Activated naive CD4-positive, alpha-beta T cell treated with anti-CD3 and anti-CD28 coated beads for 36 hours (primary cell): ENCODE measurements at regions of chr9 and their contacts with region 1.

Region 1: DNA sequence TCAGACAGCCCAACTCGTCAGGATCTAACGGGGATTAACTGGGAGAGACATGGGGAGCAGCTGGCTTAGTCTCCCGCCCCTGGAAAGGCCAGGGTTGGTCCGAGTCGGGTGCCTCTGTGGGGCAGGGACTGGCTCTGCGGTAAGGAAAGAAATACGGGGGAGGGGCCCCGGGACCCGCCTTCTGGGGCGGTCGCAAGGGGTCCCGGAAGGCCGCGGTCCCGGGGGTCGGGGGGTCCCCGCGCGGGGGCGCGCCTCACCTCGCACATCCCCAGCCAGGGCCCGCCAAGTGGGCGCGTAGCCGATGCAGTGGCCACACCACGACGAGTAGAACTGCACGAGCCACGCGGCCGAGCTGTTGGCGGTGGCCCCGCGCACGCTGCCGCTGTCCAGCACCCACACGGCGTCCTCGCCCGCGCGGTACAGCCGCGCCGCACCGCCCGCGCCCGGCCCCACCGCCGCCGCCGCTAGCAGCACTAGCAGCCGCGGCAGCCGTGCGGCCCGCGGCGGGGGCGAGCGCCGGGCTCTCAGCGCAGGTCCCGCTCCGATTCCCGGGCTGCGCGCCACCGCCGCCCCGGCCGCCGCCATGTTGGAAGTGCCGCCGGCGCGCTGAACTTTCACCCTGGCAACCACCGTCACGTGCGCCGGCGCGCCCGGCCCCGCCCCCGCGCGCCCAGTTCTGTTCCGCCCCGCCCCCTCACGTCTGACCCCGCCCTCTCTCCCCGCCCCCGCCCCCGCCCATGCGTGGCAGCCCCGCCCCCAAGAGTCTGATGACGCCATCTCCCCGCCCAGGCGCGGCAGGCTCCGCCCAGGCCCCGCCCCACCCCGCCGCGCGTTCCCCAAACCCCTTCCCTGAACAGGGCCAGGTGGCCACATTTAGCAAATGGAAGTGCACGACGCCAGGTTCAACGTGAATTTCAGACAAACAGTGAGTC is at the start of gene QSOX2:
- DNase-seq: peak; percentile 85
- H3K4me3 Mint-ChIP-seq: peak within 1 kb of the TSS; percentile 92
- H3K27ac Mint-ChIP-seq: peak within 1 kb of the TSS; percentile 88
- H3K4me1 Mint-ChIP-seq: peaks cover 35% of the 10 kb centered on the region
- H3K27me3 Mint-ChIP-seq: no peaks in the 10 kb centered on the region
- total RNA-seq, gene QSOX2: 17.7 to 18.0 TPM

Region 2: DNA sequence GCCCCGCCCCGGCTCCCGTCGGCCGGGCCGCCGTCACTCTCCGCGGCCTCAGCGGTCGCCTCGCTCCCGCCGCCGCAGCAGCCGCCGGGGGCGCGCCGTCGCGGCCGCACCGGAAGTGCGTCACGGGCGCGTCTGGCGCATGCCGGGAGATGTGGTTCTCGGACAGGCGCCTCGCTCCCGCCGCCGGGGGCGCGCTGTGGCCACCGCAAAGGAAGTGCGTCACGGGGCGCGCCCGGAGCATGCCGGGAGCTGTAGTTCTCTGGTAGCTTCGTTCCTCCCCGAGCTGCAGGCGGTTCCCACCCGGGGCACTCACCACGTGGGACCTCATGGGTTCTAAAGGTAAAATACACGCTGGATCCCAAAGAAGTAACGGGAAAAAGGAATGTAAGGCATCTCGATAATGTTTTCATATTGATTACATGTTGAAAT is 284.2 kb before region 1 on chr9 and contains the start of gene UBAC1:
- CTCF ChIA-PET with region 1: no interaction called
- intact Hi-C with region 1: loop called (anchors 10 kb)
- DNase-seq: peak; percentile 94
- H3K4me3 Mint-ChIP-seq: peak within 1 kb of the TSS; percentile 87
- H3K27ac Mint-ChIP-seq: peak within 1 kb of the TSS; percentile 50
- H3K4me1 Mint-ChIP-seq: peaks cover 32% of the 10 kb centered on the region
- H3K27me3 Mint-ChIP-seq: no peaks in the 10 kb centered on the region
- total RNA-seq, gene UBAC1: 37.2 to 40.0 TPM

Region 3: GRCh38 chr9:136225748-136226679 is 19.5 kb before region 1 on chr9:
- CTCF ChIA-PET with region 1: no interaction called
- intact Hi-C with region 1: loop called (anchors 2 kb)
- DNase-seq: peak; percentile 76
- H3K4me3 Mint-ChIP-seq: no peak overlapping the region
- H3K27ac Mint-ChIP-seq: no peak overlapping the region
- H3K4me1 Mint-ChIP-seq: peaks cover 10% of the 10 kb centered on the region
- H3K27me3 Mint-ChIP-seq: no peaks in the 10 kb centered on the region

Region 4: DNA sequence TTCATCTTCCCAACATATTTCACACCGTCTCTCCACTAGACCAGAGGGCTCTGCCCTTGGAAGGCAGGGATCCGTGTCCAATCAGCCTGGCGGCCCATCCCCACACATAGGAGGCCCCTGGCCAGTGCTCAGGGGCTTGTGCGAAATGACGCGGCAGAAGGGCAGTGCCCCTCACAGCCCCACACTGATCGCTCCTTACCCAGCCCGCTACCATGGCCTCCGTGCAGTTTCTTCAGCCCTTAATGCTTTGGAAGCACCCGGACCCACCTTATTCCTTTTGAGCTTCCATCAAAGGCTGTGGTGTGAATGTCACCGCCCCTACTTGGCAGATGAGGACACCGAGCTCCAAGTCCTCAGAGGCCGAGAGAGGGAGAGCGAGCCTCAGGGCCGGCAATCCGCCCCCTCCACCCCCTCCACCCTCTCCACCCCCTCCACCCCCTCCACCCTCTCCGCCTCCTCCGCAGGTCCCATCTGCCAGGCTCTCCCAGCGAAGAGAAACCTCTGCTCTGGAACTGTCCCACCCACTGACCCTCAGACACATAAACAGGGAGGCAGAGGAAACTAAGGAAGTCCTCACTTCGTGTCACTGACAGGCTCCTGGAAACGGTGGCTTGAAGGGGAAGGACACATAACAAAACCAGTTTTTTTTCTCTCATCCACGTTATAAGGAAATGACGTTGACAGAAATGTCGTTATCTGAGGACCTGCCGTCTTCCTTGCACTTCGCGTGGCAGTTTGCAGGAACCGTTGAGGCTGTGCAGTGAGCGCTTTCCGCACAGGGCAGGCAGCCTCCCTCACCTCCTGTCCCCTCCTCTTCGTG is 13.8 kb before region 1 on chr9:
- CTCF ChIA-PET with region 1: interaction called, 4 read pairs
- intact Hi-C with region 1: loop called (anchors 1 kb)
- DNase-seq: peak; percentile 67
- H3K4me3 Mint-ChIP-seq: peak overlapping the region; percentile 48
- H3K27ac Mint-ChIP-seq: peak overlapping the region; percentile 72
- H3K4me1 Mint-ChIP-seq: peaks cover 39% of the 10 kb centered on the region
- H3K27me3 Mint-ChIP-seq: no peaks in the 10 kb centered on the region

Region 5: GRCh38 chr9:136267261-136268111 is 22.0 kb after region 1 on chr9:
- CTCF ChIA-PET with region 1: interaction called, 5 read pairs
- intact Hi-C with region 1: loop called (anchors 1 kb)
- DNase-seq: peak; percentile 85
- H3K4me3 Mint-ChIP-seq: peak overlapping the region; percentile 66
- H3K27ac Mint-ChIP-seq: peak overlapping the region; percentile 41
- H3K4me1 Mint-ChIP-seq: peaks cover 4% of the 10 kb centered on the region
- H3K27me3 Mint-ChIP-seq: peaks cover 2% of the 10 kb centered on the region

Region 6: DNA sequence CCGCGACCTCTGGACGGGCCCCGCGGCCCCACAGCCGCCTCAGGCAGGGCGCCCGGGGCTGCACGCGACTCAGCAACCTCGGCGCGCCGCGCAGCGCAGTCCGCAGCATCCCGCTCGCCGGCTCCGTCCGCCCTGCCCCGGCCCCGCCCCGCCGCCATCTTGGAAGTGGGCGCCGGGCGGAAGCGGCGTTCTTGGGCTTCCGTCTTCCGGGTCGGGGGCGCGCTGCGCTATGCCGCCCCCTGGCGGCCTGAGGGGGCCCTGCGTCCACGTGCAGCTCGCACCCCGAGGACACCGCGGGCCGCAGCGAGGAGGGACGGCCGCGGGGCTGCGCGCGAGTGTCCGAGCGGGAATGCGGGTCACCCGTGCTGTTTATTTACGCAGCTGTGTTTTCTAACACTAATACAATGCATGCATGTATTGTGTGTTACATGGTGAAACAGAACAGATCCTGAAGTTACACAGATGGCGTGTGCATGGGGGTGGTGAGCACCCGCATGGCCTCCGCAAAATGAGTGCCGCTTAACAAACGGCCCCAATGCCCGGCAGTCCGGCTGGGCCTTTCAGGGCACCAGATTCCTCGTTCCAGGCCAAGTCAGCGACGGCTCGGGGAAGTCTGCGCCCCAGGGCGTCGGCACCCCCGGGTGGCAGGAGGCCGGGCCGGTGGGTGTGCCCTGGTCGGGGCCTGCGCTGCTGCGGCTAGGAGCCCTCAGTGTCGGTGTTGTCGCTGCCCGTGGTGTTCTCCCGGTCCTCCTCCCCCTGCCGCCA is 118.3 kb after region 1 on chr9 and contains the start of gene DNLZ:
- CTCF ChIA-PET with region 1: no interaction called
- intact Hi-C with region 1: loop called (anchors 1 kb)
- DNase-seq: peak; percentile 86
- H3K4me3 Mint-ChIP-seq: peak within 1 kb of the TSS; percentile 84
- H3K27ac Mint-ChIP-seq: peak within 1 kb of the TSS; percentile 89
- H3K4me1 Mint-ChIP-seq: peaks cover 5% of the 10 kb centered on the region
- H3K27me3 Mint-ChIP-seq: no peaks in the 10 kb centered on the region
- total RNA-seq, gene DNLZ: 9.9 to 12.0 TPM

Region 7: DNA sequence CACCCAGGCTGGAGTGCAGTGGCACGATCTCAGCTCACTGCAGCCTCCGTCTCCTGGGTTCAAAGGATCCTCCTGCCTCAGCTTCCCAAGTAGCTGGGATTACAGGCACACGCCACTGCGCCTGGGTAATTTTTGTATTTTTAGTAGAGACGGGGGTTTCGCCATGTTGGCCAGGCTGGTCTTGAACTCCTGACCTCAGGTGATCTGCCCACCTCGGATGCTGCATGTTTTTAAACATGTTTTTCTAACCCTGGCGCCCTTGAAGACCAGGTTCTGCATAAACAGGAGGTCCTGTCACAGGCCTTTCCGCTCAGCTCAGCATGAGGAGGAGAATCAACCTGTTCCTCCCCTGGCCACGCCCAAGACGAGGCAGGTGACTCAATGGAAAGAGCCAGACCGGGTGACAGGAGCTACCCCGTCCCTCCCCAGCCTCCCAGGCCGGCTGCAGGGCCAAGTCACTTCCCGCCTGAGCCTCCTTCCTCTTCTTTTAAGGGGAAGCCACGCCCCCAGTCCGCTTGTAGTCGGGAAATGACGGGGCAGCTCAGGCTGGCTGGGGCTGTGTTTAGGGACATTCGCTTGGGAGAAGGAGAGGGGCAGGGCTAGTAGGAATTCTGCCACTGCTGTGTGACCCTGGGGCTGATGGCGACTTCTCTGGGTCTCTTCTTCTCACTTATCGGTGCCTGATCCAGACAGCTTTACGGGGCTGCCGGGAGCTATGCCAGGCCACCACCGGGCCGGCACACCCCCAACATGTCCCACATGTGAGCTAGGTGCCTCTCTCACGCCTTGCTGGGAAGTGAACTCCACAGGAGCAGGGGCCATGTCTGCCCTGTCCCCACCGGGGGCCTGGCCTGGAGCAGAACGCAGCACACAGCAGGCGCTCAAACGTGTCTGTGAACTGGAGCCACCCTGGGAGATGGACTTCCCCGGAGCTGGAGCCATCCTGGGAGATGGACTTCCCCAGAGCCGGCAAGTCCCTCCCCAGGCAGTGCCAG is 294.2 kb after region 1 on chr9:
- CTCF ChIA-PET with region 1: no interaction called
- intact Hi-C with region 1: loop called (anchors 1 kb)
- DNase-seq: peak; percentile 99
- H3K4me3 Mint-ChIP-seq: peak overlapping the region; percentile 80
- H3K27ac Mint-ChIP-seq: peak overlapping the region; percentile 100
- H3K4me1 Mint-ChIP-seq: peaks cover 70% of the 10 kb centered on the region
- H3K27me3 Mint-ChIP-seq: no peaks in the 10 kb centered on the region